CD8-positive, alpha-beta T cell (primary cell): ENCODE measurements at regions of chr9 and their contacts with region 1.

Region 1: GRCh38 chr9:133149126-133150107 is 14.3 kb downstream of the GBGT1 start:
- DNase-seq: peak; percentile 61 to 94 (median 81)
- ATAC-seq: peak; percentile 50
- H3K4me3 ChIP-seq: peak overlapping the region; percentile 51 to 63
- H3K4me3 Mint-ChIP-seq: peak overlapping the region; percentile 81
- H3K27ac ChIP-seq: peak overlapping the region; percentile 78 to 91
- H3K27ac Mint-ChIP-seq: peak overlapping the region; percentile 87
- H3K4me1 ChIP-seq: peaks cover 34% of the 10 kb centered on the region
- H3K4me1 Mint-ChIP-seq: peaks cover 35% of the 10 kb centered on the region
- H3K27me3 ChIP-seq: no peaks in the 10 kb centered on the region
- H3K27me3 Mint-ChIP-seq: no peaks in the 10 kb centered on the region
- CTCF ChIP-seq: peak; percentile 60

Region 2: GRCh38 chr9:132698989-132699388 is 450.4 kb before region 1 on chr9:
- CTCF ChIA-PET with region 1: no interaction called
- POLR2A ChIA-PET with region 1: no interaction called
- intact Hi-C with region 1: no loop called
- DNase-seq: no peak
- ATAC-seq: no peak
- H3K4me3 ChIP-seq: no peak overlapping the region
- H3K4me3 Mint-ChIP-seq: no peak overlapping the region
- H3K27ac ChIP-seq: no peak overlapping the region
- H3K27ac Mint-ChIP-seq: no peak overlapping the region
- H3K4me1 ChIP-seq: no peaks in the 10 kb centered on the region
- H3K4me1 Mint-ChIP-seq: no peaks in the 10 kb centered on the region
- H3K27me3 ChIP-seq: no peaks in the 10 kb centered on the region
- H3K27me3 Mint-ChIP-seq: peaks cover 3% of the 10 kb centered on the region
- CTCF ChIP-seq: no peak

Region 3: DNA sequence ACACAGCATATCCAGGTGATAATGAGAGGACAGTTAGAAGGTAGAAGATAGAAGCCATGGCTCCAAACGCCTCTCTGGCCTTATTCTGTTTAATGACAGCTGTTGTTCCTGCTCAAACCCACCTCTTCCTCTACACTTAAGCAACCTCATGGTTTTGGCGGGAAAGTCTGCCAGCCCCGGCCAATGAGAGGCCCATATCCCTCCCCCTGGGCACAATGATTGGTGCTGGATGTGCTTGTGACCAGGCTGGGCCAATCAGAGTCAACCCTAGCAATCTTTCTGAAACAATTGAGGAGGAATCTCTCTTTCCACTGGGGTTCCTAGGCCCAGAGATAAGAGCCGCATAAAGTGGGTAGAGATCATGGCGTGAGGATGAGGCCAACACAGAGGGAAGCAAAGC is 175.7 kb before region 1 on chr9:
- CTCF ChIA-PET with region 1: interaction called, 5 read pairs
- POLR2A ChIA-PET with region 1: no interaction called
- intact Hi-C with region 1: loop called (anchors 1 to 5 kb)
- DNase-seq: peak in 1 of 9 experiments; percentile 28
- ATAC-seq: peak; percentile 41
- H3K4me3 ChIP-seq: no peak overlapping the region
- H3K4me3 Mint-ChIP-seq: no peak overlapping the region
- H3K27ac ChIP-seq: no peak overlapping the region
- H3K27ac Mint-ChIP-seq: no peak overlapping the region
- H3K4me1 ChIP-seq: peaks cover 3% of the 10 kb centered on the region
- H3K4me1 Mint-ChIP-seq: peaks cover 4% of the 10 kb centered on the region
- H3K27me3 ChIP-seq: peaks cover 6 to 8% of the 10 kb centered on the region in 2 experiments
- H3K27me3 Mint-ChIP-seq: peaks cover 19% of the 10 kb centered on the region
- CTCF ChIP-seq: no peak

Region 4: GRCh38 chr9:133030317-133031129 is 118.9 kb before region 1 on chr9 and contains the start of gene GTF3C5:
- CTCF ChIA-PET with region 1: interaction called, 18 read pairs
- POLR2A ChIA-PET with region 1: interaction called, 16 read pairs
- intact Hi-C with region 1: no loop called
- DNase-seq: peak; percentile 80 to 98 (median 91)
- ATAC-seq: peak; percentile 97
- H3K4me3 ChIP-seq: peak within 1 kb of the TSS; percentile 60 to 96
- H3K4me3 Mint-ChIP-seq: peak within 1 kb of the TSS; percentile 99
- H3K27ac ChIP-seq: peak within 1 kb of the TSS; percentile 75 to 94
- H3K27ac Mint-ChIP-seq: peak within 1 kb of the TSS; percentile 98
- H3K4me1 ChIP-seq: peaks cover 27% of the 10 kb centered on the region
- H3K4me1 Mint-ChIP-seq: peaks cover 54% of the 10 kb centered on the region
- H3K27me3 ChIP-seq: no peaks in the 10 kb centered on the region
- H3K27me3 Mint-ChIP-seq: no peaks in the 10 kb centered on the region
- CTCF ChIP-seq: no peak
- total RNA-seq, gene GTF3C5: 54.1 to 58.7 TPM

Region 5: DNA sequence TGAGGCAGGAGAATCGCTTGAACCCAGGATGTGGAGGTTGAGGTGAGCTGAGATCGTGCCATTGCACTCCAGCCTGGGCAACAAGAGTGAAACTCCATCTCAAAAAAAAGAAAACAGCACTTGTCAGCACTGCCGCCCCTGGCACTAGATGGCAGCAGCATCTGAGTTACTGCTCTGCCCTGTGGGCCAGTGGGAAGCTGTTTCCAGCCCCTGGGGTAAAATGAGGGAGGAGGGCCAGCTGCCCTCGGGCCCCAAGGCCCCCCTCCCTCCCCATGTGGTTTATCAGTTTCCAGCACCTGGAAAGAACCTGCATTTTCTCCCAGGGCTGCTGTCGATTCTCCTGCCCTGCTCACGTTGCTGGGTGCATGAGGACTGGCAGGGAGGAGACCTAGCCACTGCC is 100.8 kb before region 1 on chr9:
- CTCF ChIA-PET with region 1: interaction called, 29 read pairs
- POLR2A ChIA-PET with region 1: no interaction called
- intact Hi-C with region 1: loop called in 1 of 2 experiments (anchors 2 kb)
- DNase-seq: peak in 3 of 9 experiments; percentile 26 to 53 (median 43)
- ATAC-seq: peak; percentile 36
- H3K4me3 ChIP-seq: no peak overlapping the region
- H3K4me3 Mint-ChIP-seq: no peak overlapping the region
- H3K27ac ChIP-seq: no peak overlapping the region
- H3K27ac Mint-ChIP-seq: no peak overlapping the region
- H3K4me1 ChIP-seq: no peaks in the 10 kb centered on the region
- H3K4me1 Mint-ChIP-seq: no peaks in the 10 kb centered on the region
- H3K27me3 ChIP-seq: no peaks in the 10 kb centered on the region
- H3K27me3 Mint-ChIP-seq: no peaks in the 10 kb centered on the region
- CTCF ChIP-seq: no peak

Region 6: DNA sequence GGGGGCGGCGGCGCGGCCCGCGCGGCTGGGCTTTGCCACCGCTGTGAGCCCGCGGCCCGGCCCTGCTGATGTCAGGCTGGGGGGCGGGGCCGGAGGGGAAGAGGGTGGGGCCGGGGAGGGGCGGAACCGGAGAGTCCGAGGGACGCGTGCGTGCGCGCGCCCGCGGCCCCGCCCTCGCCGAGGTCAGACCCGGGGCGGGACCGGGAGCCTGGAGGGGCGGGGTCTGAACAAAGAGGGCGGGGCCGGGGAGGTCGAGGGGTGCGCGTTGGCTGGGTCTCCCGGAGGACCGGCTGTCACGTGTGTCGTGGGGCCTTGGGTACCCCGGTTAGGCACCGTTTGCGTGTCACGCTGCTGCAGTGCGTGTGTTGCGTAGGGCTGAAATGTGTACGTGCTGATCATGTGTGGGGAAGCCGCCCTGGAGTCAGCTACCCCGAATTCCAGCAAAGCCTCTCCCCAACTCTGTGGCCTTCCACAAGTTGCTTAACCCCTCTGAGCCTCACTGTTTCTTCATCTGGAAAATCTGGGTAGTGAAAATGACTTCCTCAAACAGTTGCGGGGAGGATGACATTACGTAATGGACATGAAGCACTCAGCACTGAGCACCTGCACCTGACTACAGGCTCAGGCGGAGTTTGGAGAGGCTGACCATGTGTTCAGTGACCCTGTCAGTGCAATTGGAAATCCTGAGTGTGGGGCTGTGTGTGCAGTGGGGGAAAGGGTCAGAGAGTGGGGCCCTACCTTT is 28.0 kb before region 1 on chr9 and contains the start of gene RALGDS:
- CTCF ChIA-PET with region 1: interaction called, 606 read pairs
- POLR2A ChIA-PET with region 1: interaction called, 22 read pairs
- intact Hi-C with region 1: loop called (anchors 1 kb)
- DNase-seq: peak; percentile 84 to 95 (median 92)
- ATAC-seq: peak; percentile 83
- H3K4me3 ChIP-seq: peak within 1 kb of the TSS; percentile 41 to 53
- H3K4me3 Mint-ChIP-seq: peak within 1 kb of the TSS; percentile 84
- H3K27ac ChIP-seq: peak within 1 kb of the TSS; percentile 66 to 96
- H3K27ac Mint-ChIP-seq: peak within 1 kb of the TSS; percentile 98
- H3K4me1 ChIP-seq: peaks cover 63% of the 10 kb centered on the region
- H3K4me1 Mint-ChIP-seq: peaks cover 70% of the 10 kb centered on the region
- H3K27me3 ChIP-seq: no peaks in the 10 kb centered on the region
- H3K27me3 Mint-ChIP-seq: no peaks in the 10 kb centered on the region
- CTCF ChIP-seq: no peak
- total RNA-seq, gene RALGDS: 177 to 186 TPM

Region 7: DNA sequence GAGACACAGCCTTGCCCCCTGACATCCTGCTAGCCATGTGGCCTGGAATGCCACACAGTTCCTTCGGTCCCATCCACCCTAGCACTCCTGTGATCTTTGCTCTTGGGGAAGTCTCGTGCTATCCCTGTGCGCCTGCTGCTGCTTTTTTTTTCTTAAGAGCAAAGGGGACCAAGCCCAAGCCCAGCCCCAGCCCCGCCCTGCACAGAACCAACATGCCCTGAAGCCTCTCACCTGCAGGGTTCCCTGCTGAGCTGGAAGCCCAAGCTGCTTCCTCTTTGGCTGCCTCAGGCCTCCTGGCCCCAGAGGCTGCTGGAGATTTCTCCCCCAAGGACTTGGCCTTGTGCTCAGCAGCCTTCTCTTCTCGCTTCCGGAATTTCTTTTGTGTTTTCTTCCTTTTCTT is 184.7 kb after region 1 on chr9:
- CTCF ChIA-PET with region 1: no interaction called
- POLR2A ChIA-PET with region 1: no interaction called
- intact Hi-C with region 1: no loop called
- DNase-seq: peak in 1 of 9 experiments; percentile 5
- ATAC-seq: no peak
- H3K4me3 ChIP-seq: no peak overlapping the region
- H3K4me3 Mint-ChIP-seq: no peak overlapping the region
- H3K27ac ChIP-seq: no peak overlapping the region
- H3K27ac Mint-ChIP-seq: peak overlapping the region; percentile 37
- H3K4me1 ChIP-seq: peaks cover 24% of the 10 kb centered on the region
- H3K4me1 Mint-ChIP-seq: peaks cover 42% of the 10 kb centered on the region
- H3K27me3 ChIP-seq: no peaks in the 10 kb centered on the region
- H3K27me3 Mint-ChIP-seq: no peaks in the 10 kb centered on the region
- CTCF ChIP-seq: no peak

Region 8: DNA sequence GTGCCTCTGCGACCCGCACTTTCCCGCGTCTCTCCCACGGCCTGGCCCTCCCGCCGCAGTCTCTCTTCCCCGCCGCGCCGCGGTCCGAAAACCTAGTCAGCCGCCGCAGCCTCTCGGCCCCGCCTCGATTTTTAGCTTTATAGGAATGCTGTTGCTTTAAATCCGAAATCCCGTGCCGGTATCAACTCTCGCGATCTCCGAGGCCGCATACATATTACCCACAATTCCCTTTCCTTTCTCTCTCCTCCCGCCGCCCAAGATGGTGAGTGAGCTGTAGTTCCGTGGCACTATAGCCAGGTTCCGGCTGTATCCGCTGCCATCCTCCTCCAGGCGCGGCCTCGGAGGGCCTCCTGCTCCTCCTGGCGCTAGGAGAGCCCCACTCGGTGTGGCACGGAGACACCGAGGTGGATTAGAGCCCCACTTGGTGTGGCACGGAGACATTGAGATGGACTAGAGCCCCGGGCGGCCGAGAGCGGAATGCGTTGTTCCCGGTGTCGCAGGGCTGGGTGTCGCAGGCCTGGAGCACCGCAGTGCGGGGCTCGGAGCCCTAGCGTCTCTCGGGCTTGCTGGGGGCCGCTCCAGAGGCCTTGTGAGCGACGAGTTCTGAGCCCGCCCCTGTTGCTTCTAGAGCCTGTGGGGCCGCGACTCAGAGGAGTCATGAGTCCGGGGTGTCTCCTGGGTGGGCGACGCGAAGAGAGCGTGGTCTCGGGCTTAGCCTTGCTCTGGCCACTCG is 198.7 kb after region 1 on chr9 and contains the starts of genes MED22 and RPL7A:
- CTCF ChIA-PET with region 1: no interaction called
- POLR2A ChIA-PET with region 1: no interaction called
- intact Hi-C with region 1: loop called in 1 of 2 experiments (anchors 5 kb)
- DNase-seq: peak; percentile 80 to 97 (median 91)
- ATAC-seq: peak; percentile 85
- H3K4me3 ChIP-seq: peak within 1 kb of the TSS; percentile 95 to 100
- H3K4me3 Mint-ChIP-seq: peak within 1 kb of the TSS; percentile 100
- H3K27ac ChIP-seq: peak within 1 kb of the TSS; percentile 87 to 93
- H3K27ac Mint-ChIP-seq: peak within 1 kb of the TSS; percentile 98
- H3K4me1 ChIP-seq: peaks cover 23% of the 10 kb centered on the region
- H3K4me1 Mint-ChIP-seq: peaks cover 39% of the 10 kb centered on the region
- H3K27me3 ChIP-seq: no peaks in the 10 kb centered on the region
- H3K27me3 Mint-ChIP-seq: no peaks in the 10 kb centered on the region
- CTCF ChIP-seq: no peak
- total RNA-seq, gene MED22: 17.8 to 21.2 TPM
- total RNA-seq, gene RPL7A: 2,612 to 2,623 TPM

Region 9: GRCh38 chr9:134163353-134164196 is 1014.2 kb after region 1 on chr9:
- CTCF ChIA-PET with region 1: no interaction called
- POLR2A ChIA-PET with region 1: no interaction called
- intact Hi-C with region 1: loop called in 1 of 2 experiments (anchors 10 kb)
- DNase-seq: peak; percentile 38 to 87 (median 68)
- ATAC-seq: peak; percentile 19
- H3K4me3 ChIP-seq: no peak overlapping the region
- H3K4me3 Mint-ChIP-seq: no peak overlapping the region
- H3K27ac ChIP-seq: no peak overlapping the region
- H3K27ac Mint-ChIP-seq: no peak overlapping the region
- H3K4me1 ChIP-seq: peaks cover 18% of the 10 kb centered on the region
- H3K4me1 Mint-ChIP-seq: peaks cover 17% of the 10 kb centered on the region
- H3K27me3 ChIP-seq: no peaks in the 10 kb centered on the region
- H3K27me3 Mint-ChIP-seq: no peaks in the 10 kb centered on the region
- CTCF ChIP-seq: peak; percentile 32